Activated naive CD4-positive, alpha-beta T cell treated with anti-CD3 and anti-CD28 coated beads for 36 hours (primary cell): ENCODE measurements at regions of chr10 and their contacts with region 1.

Region 1: GRCh38 chr10:101031128-101031795 is at the starts of genes PDZD7 and SFXN3:
- DNase-seq: peak; percentile 97
- H3K4me3 Mint-ChIP-seq: peak within 1 kb of the TSS; percentile 73
- H3K27ac Mint-ChIP-seq: peak within 1 kb of the TSS; percentile 64
- H3K4me1 Mint-ChIP-seq: peaks cover 12% of the 10 kb centered on the region
- H3K27me3 Mint-ChIP-seq: no peaks in the 10 kb centered on the region
- total RNA-seq, gene PDZD7: 0.37 to 0.62 TPM
- total RNA-seq, gene SFXN3: 15.7 to 17.1 TPM

Region 2: DNA sequence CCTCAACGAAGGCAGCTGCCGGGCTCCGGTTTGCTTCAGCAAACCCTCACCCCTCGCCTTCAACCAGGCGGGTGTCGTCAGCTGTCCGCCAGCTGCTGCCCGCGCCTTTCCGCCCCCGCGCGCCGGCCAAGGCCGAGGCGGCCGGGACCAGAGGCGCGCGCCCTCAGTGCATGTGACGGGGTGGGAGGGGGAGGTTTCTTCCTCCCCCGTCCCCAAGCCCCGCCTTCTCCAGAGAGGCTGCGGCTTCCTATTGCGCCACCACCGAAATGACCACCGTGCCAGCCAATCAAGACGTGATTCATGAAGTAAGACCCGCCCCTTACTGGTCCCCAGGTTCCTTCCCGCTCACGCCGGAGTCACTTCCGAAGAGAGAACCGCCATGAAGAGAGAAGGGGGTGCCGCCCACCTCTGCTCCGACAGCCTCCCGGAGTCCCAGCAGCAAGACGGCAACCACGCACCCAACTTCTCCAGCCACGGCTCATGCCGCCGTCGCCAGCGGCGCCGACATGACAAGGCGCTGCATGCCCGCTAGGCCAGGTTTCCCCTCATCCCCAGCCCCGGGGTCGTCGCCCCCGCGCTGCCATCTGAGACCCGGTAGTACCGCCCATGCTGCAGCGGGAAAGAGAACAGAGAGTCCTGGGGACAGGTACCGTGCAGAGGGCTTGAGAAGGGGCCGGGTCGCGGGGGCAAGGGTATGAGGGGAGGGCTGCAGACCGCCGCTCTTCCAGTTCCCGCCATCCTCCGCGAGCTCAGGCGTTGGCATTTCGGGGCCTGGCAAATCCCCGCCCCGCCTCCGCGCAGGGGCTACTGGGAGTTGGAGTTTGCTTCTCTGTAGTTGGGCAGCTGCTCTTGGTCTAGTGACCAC is 118.4 kb before region 1 on chr10 and contains the start of gene SLF2:
- CTCF ChIA-PET with region 1: no interaction called
- intact Hi-C with region 1: loop called (anchors 1 kb)
- DNase-seq: peak; percentile 98
- H3K4me3 Mint-ChIP-seq: peak within 1 kb of the TSS; percentile 98
- H3K27ac Mint-ChIP-seq: peak within 1 kb of the TSS; percentile 99
- H3K4me1 Mint-ChIP-seq: peaks cover 42% of the 10 kb centered on the region
- H3K27me3 Mint-ChIP-seq: no peaks in the 10 kb centered on the region
- total RNA-seq, gene SLF2: 29.3 to 30.3 TPM

Region 3: DNA sequence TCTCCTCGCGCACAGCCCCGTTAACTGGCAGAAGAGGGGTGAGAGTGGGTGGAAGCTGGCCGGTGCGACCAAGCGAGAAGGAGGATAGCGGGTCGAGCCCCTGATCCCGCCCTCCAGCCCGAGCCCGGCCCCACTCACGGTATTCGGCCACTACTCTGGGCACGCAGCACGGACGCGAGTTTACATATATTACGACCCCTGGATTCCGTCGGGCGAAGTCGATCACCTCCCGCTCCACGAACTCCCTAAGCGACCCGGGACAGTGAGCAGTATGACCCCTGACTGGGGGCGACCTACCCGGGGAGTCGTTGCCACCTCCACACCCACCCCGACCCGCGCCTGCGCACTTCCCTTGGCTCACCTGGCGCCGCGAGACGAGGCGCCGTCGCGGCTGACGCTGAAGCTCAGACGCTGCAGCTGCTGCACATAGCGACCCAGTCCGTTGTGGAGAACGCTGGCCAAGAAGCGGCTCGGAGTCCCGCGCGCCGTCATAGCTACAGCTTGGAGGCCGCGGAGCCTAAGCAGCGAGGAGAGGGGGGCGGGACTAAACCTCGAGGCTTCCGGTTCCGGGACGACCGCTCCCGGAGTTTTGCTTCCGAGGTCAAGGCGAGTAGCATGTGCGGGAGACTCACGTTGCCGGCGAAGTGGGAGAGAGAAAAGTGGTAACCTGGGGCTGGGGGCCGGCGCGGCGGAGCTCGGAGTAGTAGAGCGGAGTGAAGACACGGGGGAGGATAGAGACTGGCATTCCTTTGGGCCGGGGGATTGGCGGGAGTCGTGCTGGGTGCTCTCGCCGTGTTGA is 44.1 kb before region 1 on chr10 and contains the starts of genes MRPL43 and TWNK:
- CTCF ChIA-PET with region 1: no interaction called
- intact Hi-C with region 1: loop called (anchors 1 kb)
- DNase-seq: peak; percentile 91
- H3K4me3 Mint-ChIP-seq: peak within 1 kb of the TSS; percentile 91
- H3K27ac Mint-ChIP-seq: peak within 1 kb of the TSS; percentile 72
- H3K4me1 Mint-ChIP-seq: peaks cover 51% of the 10 kb centered on the region
- H3K27me3 Mint-ChIP-seq: no peaks in the 10 kb centered on the region
- total RNA-seq, gene MRPL43: 45.0 to 47.3 TPM
- total RNA-seq, gene TWNK: 10.4 to 11.4 TPM

Region 4: GRCh38 chr10:101018600-101019439 is 12.4 kb before region 1 on chr10:
- CTCF ChIA-PET with region 1: interaction called, 88 read pairs
- intact Hi-C with region 1: no loop called
- DNase-seq: peak; percentile 87
- H3K4me3 Mint-ChIP-seq: no peak overlapping the region
- H3K27ac Mint-ChIP-seq: no peak overlapping the region
- H3K4me1 Mint-ChIP-seq: peaks cover 8% of the 10 kb centered on the region
- H3K27me3 Mint-ChIP-seq: peaks cover 41% of the 10 kb centered on the region

Region 5: GRCh38 chr10:101042667-101043355 is 11.5 kb after region 1 on chr10:
- CTCF ChIA-PET with region 1: interaction called, 37 read pairs
- intact Hi-C with region 1: loop called (anchors 1 kb)
- DNase-seq: peak; percentile 97
- H3K4me3 Mint-ChIP-seq: peak overlapping the region; percentile 91
- H3K27ac Mint-ChIP-seq: peak overlapping the region; percentile 74
- H3K4me1 Mint-ChIP-seq: peaks cover 22% of the 10 kb centered on the region
- H3K27me3 Mint-ChIP-seq: peaks cover 17% of the 10 kb centered on the region

Region 6: DNA sequence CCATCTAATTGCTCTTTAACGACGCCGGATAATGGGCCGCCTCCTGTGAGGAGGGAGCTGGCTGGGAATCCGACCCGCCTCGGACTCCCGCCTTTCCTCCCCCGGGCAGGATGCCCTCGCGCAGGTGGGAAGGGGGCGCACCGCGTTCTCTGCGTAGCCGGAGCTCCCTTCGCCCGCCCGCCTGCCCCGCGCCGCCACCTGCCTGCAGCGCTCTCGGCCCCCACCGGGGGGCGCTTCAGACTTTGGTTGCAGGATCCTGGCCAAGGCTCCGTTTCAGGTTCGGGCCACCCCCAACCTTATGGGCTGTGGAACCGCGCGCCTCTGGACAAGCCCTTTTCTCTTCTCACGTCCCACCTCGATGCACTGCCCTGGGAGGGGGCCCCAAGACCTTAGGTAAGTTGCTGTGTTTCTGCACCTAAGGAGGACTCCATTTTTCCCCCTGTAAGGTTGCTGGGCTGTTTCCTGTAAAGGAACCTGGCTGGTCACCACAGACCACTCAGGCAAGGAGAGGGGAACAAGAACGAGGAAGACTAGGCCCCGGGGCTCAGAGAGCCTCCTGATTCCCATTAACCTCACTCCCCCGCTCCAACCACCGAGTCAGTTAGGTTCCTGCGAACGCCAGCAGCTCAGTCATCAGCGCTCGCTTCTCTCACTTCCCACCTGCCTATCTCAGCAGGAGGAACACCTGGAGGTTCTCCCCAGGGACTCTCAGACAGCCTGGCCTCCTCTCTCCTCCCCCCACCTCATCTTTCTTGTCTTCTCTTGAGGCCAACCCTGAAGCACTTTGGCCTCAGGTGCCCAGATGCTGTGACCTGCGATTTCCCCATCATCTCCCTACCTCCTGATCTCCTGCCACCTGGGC is 19.2 kb after region 1 on chr10:
- CTCF ChIA-PET with region 1: interaction called, 10 read pairs
- intact Hi-C with region 1: no loop called
- DNase-seq: peak; percentile 81
- H3K4me3 Mint-ChIP-seq: no peak overlapping the region
- H3K27ac Mint-ChIP-seq: no peak overlapping the region
- H3K4me1 Mint-ChIP-seq: peaks cover 9% of the 10 kb centered on the region
- H3K27me3 Mint-ChIP-seq: peaks cover 48% of the 10 kb centered on the region

Region 7: GRCh38 chr10:101060036-101060950 is 29.0 kb after region 1 on chr10:
- CTCF ChIA-PET with region 1: interaction called, 8 read pairs
- intact Hi-C with region 1: loop called (anchors 1 kb)
- DNase-seq: peak; percentile 96
- H3K4me3 Mint-ChIP-seq: peak overlapping the region; percentile 87
- H3K27ac Mint-ChIP-seq: peak overlapping the region; percentile 93
- H3K4me1 Mint-ChIP-seq: peaks cover 29% of the 10 kb centered on the region
- H3K27me3 Mint-ChIP-seq: peaks cover 24% of the 10 kb centered on the region

Region 8: DNA sequence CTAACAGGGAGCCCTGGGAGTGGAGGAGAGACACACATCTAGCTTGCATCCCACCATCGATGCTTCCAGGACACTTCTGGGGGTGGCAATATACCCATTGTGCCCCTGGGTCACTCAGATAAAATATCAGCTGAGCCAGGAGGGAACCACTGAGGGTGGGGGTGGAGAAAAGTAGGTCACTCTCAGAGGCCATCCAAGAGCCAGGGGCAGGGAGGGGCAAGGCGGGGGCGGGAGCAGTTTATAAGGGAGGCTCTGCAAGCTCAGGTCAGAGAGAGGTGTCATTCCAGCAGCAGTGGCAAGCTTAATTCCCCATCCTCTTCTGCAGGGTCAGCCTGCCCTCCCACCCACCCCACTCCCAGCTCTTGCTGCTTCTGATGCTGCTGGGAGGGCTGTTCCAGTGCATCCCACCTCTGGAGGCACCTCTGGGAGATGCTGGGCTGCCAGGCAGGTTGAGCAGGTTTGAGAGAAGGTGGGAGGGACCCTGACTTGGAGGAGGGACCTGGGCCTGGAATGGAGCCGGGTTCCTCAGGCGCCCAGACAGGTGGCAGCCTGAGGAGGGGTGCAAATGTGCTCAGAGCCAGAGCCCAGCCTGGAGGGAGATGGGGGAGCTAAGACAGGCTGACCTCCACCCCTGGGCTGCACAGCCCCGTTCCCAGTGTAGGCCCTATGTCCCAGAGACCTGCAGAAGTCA is 79.7 kb after region 1 on chr10:
- CTCF ChIA-PET with region 1: no interaction called
- intact Hi-C with region 1: no loop called
- DNase-seq: no peak
- H3K4me3 Mint-ChIP-seq: no peak overlapping the region
- H3K27ac Mint-ChIP-seq: no peak overlapping the region
- H3K4me1 Mint-ChIP-seq: no peaks in the 10 kb centered on the region
- H3K27me3 Mint-ChIP-seq: peaks cover 27% of the 10 kb centered on the region

Region 9: GRCh38 chr10:101353692-101354327 is 322.5 kb after region 1 on chr10 and contains the start of gene BTRC:
- CTCF ChIA-PET with region 1: no interaction called
- intact Hi-C with region 1: no loop called
- DNase-seq: peak; percentile 98
- H3K4me3 Mint-ChIP-seq: peak within 1 kb of the TSS; percentile 92
- H3K27ac Mint-ChIP-seq: peak within 1 kb of the TSS; percentile 95
- H3K4me1 Mint-ChIP-seq: peaks cover 30% of the 10 kb centered on the region
- H3K27me3 Mint-ChIP-seq: peaks cover 2% of the 10 kb centered on the region
- total RNA-seq, gene BTRC: 10.9 to 12.7 TPM